Tibial artery (tissue), 4 donors: ENCODE measurements at regions of chr11 and their contacts with region 1.

Region 1: GRCh38 chr11:72722050-72722748 is 30.0 kb downstream of the ARAP1 start:
- DNase-seq: peak; percentile 90 to 95
- H3K4me3 ChIP-seq: peak overlapping the region; percentile 60 to 72
- H3K27ac ChIP-seq: peak overlapping the region; percentile 72 to 73
- H3K4me1 ChIP-seq: peaks cover 0 to 52% (median 37%) of the 10 kb centered on the region in 4 donors
- H3K27me3 ChIP-seq: no peaks in the 10 kb centered on the region
- CTCF ChIP-seq: no peak

Region 2: GRCh38 chr11:72793425-72794367 is 71.5 kb after region 1 on chr11 and contains the start of gene STARD10:
- intact Hi-C with region 1: loop called (anchors 5 kb)
- DNase-seq: peak; percentile 96 to 97
- H3K4me3 ChIP-seq: peak within 1 kb of the TSS; percentile 55 to 63
- H3K27ac ChIP-seq: peak within 1 kb of the TSS; percentile 75 to 86
- H3K4me1 ChIP-seq: peaks cover 0 to 42% (median 31%) of the 10 kb centered on the region in 4 donors
- H3K27me3 ChIP-seq: no peaks in the 10 kb centered on the region
- CTCF ChIP-seq: peak; percentile 94 to 100

Region 3: GRCh38 chr11:72814286-72815109 is 92.3 kb after region 1 on chr11 and contains the start of gene ATG16L2:
- intact Hi-C with region 1: loop called (anchors 5 kb)
- DNase-seq: peak; percentile 75 to 86
- H3K4me3 ChIP-seq: peak within 1 kb of the TSS; percentile 90 to 96
- H3K27ac ChIP-seq: peak within 1 kb of the TSS; percentile 93
- H3K4me1 ChIP-seq: peaks cover 0 to 50% (median 36%) of the 10 kb centered on the region in 4 donors
- H3K27me3 ChIP-seq: no peaks in the 10 kb centered on the region
- CTCF ChIP-seq: peak; percentile 35 to 46

Region 4: DNA sequence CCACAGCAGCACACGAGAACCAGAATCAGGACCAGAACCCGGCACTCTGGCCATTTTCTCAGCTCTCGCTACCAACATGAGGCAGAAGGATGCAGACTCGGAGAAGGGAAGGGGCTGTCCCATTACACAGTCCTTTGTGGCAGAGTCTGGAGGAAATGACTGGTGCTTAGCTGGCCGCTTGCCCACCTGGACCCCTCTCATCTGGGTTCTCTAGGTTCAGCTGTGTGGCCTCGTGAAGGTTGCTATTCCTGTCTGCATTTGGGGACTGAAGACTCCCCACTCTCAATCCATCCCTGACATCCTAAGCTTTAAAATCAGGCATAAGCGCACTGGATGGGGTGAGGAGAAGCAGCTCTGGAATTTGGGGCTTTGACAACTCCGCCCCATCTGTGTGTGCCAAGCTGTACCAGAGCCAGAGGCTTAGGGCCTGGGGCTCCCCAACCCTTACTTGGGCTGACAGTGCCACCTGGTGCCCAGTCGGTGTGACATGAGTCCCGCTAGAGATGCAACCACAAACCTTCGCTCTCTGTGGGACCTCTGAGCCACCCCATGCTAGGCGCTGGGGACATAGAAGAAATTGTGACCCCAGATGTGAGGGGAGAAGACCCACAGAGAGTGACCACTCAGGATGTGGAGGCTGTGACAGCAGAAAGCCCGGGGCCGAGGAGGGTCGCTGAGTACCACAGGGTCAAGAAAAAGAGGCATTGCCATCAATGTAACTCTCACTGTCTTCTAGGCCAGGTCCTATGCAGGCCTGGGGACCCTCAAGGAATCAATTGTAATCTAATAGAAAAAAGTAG is 455.8 kb after region 1 on chr11:
- intact Hi-C with region 1: loop called (anchors 5 kb)
- DNase-seq: peak; percentile 85 to 94
- H3K4me3 ChIP-seq: no peak overlapping the region
- H3K27ac ChIP-seq: peak overlapping the region; percentile 64 to 82
- H3K4me1 ChIP-seq: peaks cover 0 to 54% (median 39%) of the 10 kb centered on the region in 4 donors
- H3K27me3 ChIP-seq: no peaks in the 10 kb centered on the region
- CTCF ChIP-seq: peak; percentile 77 to 97